ENCODE measurements at regions of chr5 and their contacts with region 1.

Region 1: GRCh38 chr5:58498340-58498942 is 7.2 kb downstream of the GAPT start:
- DNase-seq: no peak
- H3K4me3 ChIP-seq: no peak overlapping the region
- H3K27ac ChIP-seq: peak overlapping the region in 6 of 8 donors; percentile 71 to 88 (median 81)
- H3K4me1 ChIP-seq: peaks cover 0 to 52% (median 24%) of the 10 kb centered on the region in 6 donors
- H3K27me3 ChIP-seq: no peaks in the 10 kb centered on the region
- CTCF ChIP-seq: peak in 9 of 11 experiments; percentile 26 to 69 (median 63)
- POLR2A ChIP-seq: no peak

Region 2: GRCh38 chr5:58582803-58583491 is 84.5 kb after region 1 on chr5 and contains the start of gene RAB3C:
- intact Hi-C with region 1: loop called (anchors 10 kb)
- DNase-seq: peak; percentile 96
- H3K4me3 ChIP-seq: peak within 1 kb of the TSS; percentile 46 to 77 (median 57)
- H3K27ac ChIP-seq: no peak within 1 kb of the TSS
- H3K4me1 ChIP-seq: peaks cover 4 to 22% (median 15%) of the 10 kb centered on the region in 6 donors
- H3K27me3 ChIP-seq: peaks cover 3 to 59% (median 33%) of the 10 kb centered on the region in 7 donors
- CTCF ChIP-seq: peak in 10 of 11 experiments; percentile 17 to 59 (median 35)
- POLR2A ChIP-seq: no peak
- total RNA-seq, gene RAB3C: 0.06 to 2.0 (median 0.22) TPM in 5 of 7 donors, not detected in the others

Measured in spleen (tissue), 13 donors.